ENCODE measurements at regions of chr7 and their contacts with region 1.

Region 1: DNA sequence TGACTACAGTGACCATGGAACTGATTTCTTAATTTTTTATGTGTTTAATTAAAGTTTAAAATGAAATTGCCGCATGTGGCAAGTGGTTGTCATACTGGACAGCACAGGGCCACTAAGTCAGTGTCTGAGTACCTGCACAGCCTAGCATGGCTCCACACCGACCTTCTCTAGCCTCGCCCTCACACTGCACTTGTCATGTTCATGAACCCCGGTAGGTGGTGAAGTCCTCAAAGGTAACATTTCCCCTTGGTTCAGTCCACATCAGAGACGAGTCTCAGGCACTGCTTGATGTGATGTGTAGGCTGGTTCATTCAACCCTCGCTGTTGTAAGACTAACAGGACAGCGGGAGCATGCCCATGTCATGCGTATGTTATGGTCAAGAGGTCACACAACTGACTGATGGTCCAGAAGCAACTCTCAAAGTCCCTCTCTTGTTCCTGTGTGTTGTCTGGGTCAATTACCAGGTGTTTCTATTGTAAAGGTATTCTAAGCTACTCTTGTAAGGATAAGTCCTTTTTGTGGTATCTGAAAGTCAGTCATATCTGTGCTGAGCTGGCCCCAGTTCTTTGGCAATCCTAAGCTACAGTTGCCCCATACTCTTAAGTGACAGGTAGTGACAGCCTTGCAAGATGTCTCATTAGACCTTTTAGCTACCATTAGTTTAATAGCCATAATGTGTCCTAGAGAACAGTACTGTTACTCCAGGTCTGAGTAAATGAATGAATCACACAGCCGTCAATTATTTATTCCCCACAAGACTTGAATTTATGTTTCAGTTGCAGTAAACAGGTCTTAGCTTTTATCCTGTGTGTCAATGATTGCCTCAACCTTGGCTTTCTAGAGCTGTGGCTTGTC is 32.9 kb upstream of the ZC3HAV1L start:
- DNase-seq: no peak
- H3K4me3 ChIP-seq: no peak overlapping the region
- H3K27ac ChIP-seq: no peak overlapping the region
- H3K4me1 ChIP-seq: peaks cover 5 to 23% (median 10%) of the 10 kb centered on the region in 4 experiments
- H3K27me3 ChIP-seq: no peaks in the 10 kb centered on the region

Region 2: DNA sequence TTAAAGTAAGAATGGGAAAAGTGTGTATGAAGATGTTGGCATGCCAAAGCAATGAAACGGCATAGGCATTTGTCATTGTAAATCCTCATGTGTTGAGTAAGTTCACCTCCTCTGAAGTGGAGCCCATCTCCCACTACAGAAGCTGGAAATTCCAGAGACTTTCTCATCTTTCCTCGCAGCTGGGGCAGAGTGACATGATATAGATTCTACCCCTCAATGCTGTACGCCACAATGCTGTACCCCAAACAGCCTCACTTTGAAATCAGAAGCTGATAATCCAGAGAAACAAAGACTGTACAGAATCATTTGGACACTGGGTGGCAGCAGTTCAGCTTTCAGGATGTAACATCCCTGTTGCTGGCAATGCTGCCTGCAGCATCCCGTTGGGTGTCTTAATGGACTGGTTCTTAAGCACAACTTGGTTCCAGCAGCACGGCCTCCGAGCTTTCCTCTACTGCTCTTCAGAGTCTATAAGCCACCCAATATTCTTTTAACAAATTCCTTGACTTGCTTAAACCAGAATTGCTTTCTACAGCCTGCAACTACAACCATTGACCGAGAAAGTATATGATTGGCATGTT is 51.8 kb before region 1 on chr7:
- CTCF ChIA-PET with region 1: interaction called, 15 read pairs
- POLR2A ChIA-PET with region 1: no interaction called
- DNase-seq: peak; percentile 69 to 79 (median 78)
- H3K4me3 ChIP-seq: no peak overlapping the region
- H3K27ac ChIP-seq: no peak overlapping the region
- H3K4me1 ChIP-seq: no peaks in the 10 kb centered on the region
- H3K27me3 ChIP-seq: peaks cover 0 to 2% (median 0%) of the 10 kb centered on the region in 5 experiments

Region 3: GRCh38 chr7:139049936-139050335 is 18.8 kb before region 1 on chr7:
- CTCF ChIA-PET with region 1: interaction called, 15 read pairs
- POLR2A ChIA-PET with region 1: no interaction called
- DNase-seq: no peak
- H3K4me3 ChIP-seq: no peak overlapping the region
- H3K27ac ChIP-seq: peak overlapping the region in 1 of 2 experiments; percentile 11
- H3K4me1 ChIP-seq: peaks cover 6 to 19% (median 13%) of the 10 kb centered on the region in 4 experiments
- H3K27me3 ChIP-seq: no peaks in the 10 kb centered on the region

Region 4: DNA sequence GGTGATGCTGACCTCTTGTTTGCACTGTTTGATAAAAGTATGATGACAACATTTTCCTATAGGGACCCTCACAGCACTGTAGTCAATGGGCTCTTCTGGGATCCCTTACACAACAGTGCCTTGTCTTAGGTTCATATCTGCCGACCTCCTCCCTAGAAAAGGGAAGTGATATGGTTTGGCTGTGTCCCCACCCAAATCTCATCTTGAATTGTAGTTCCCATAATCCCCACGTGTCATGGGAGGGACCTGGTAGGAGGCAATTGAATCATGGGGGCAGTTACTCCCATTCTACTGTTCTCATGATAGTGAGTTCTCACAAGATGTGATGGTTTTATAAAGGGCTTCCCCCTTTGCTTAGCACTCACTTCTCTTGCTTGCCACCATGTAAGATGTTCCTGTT is 17.7 kb after region 1 on chr7:
- CTCF ChIA-PET with region 1: no interaction called
- POLR2A ChIA-PET with region 1: no interaction called
- DNase-seq: no peak
- H3K4me3 ChIP-seq: no peak overlapping the region
- H3K27ac ChIP-seq: no peak overlapping the region
- H3K4me1 ChIP-seq: peaks cover 0 to 16% (median 4%) of the 10 kb centered on the region in 4 experiments
- H3K27me3 ChIP-seq: no peaks in the 10 kb centered on the region

Region 5: GRCh38 chr7:139109188-139109982 is 40.6 kb after region 1 on chr7 and contains the start of gene ZC3HAV1:
- CTCF ChIA-PET with region 1: no interaction called
- POLR2A ChIA-PET with region 1: no interaction called
- DNase-seq: peak; percentile 97 to 98 (median 98)
- H3K4me3 ChIP-seq: peak within 1 kb of the TSS; percentile 87 to 99 (median 98)
- H3K27ac ChIP-seq: peak within 1 kb of the TSS; percentile 70 to 95
- H3K4me1 ChIP-seq: peaks cover 20 to 38% (median 24%) of the 10 kb centered on the region in 4 experiments
- H3K27me3 ChIP-seq: no peaks in the 10 kb centered on the region